CD4-positive, alpha-beta T cell (primary cell): ENCODE measurements at regions of chr7 and their contacts with region 1.

Region 1: DNA sequence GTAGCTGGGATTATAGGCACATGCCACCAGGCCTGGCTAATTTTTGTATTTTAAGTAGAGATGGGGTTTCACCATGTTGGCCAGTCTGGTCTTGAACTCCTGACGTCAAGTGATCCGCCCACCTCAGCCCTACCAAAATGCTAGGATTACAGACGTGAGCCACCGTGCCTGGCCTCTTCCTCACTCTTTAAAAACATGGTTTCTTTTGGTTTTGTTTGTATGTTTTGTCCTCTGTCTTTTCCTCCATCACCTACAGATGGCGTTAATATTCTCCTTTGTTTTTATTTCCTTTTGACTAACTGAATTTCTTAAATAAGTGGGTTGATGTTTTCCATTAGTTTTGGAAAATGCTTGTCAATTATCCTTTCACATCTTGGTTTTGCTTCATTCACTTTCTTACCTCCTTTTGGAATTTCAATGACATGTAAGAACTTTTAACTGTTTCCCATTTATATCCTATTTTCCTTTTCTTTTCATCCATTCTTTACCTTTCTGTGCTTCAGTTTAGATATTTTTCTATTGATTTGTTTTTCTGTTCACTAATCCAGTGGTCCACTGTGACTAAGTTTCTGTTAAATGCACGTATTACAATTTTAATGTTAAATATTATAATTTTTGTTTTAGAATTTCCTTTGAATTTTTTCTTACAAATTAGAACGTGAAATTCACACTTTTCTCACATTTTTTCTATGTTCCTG is 104.1 kb downstream of the ZNF467 start:
- DNase-seq: peak in 3 of 14 experiments; percentile 27 to 37 (median 34)
- ATAC-seq: no peak
- H3K4me3 ChIP-seq: no peak overlapping the region
- H3K4me3 Mint-ChIP-seq: no peak overlapping the region
- H3K27ac ChIP-seq: no peak overlapping the region
- H3K27ac Mint-ChIP-seq: no peak overlapping the region
- H3K4me1 ChIP-seq: no peaks in the 10 kb centered on the region
- H3K4me1 Mint-ChIP-seq: no peaks in the 10 kb centered on the region
- H3K27me3 ChIP-seq: peaks cover 7 to 40% of the 10 kb centered on the region in 2 experiments
- H3K27me3 Mint-ChIP-seq: peaks cover 86% of the 10 kb centered on the region
- CTCF ChIP-seq: peak; percentile 47

Region 2: DNA sequence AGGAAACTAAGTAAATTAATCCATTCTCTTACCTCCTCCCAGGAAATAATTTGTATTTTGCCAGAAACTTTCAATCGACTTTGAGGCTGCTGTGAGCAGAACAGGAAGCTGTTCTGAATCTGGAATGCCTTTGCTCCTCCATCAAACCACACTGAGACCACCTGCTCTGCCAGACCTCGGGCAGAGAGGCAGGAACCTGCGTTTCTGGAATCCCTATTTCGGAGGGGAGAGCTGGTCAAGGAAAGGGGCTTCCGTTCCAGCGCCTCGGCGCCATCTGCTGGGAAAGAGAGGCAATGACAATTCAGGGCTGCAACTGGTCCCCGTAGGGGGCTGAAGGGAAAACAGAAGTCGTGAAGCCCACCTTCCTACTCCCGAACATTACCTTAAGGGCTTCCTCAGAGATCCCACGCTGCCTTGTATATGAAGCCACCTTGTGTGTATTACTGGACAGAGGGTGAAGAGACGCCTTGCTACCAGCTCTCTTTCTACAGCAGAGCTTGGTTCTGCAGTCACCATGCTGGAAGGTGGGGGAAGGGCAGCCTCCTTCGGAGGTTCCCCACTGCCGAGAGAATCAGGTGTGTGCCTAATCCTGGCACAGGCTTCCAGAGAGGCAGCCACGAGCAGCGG is 72.9 kb after region 1 on chr7:
- CTCF ChIA-PET with region 1: no interaction called
- POLR2A ChIA-PET with region 1: no interaction called
- intact Hi-C with region 1: loop called in 1 of 2 experiments (anchors 1 kb)
- DNase-seq: peak in 13 of 14 experiments; percentile 32 to 73 (median 50)
- ATAC-seq: peak; percentile 62
- H3K4me3 ChIP-seq: no peak overlapping the region
- H3K4me3 Mint-ChIP-seq: peak overlapping the region; percentile 61
- H3K27ac ChIP-seq: no peak overlapping the region
- H3K27ac Mint-ChIP-seq: no peak overlapping the region
- H3K4me1 ChIP-seq: peaks cover 12% of the 10 kb centered on the region
- H3K4me1 Mint-ChIP-seq: peaks cover 11% of the 10 kb centered on the region
- H3K27me3 ChIP-seq: peaks cover 11 to 14% of the 10 kb centered on the region in 2 experiments
- H3K27me3 Mint-ChIP-seq: peaks cover 60% of the 10 kb centered on the region
- CTCF ChIP-seq: peak; percentile 95